ENCODE measurements at regions of chr9 and their contacts with region 1.

Region 1: GRCh38 chr9:36166101-36166927 is 2.9 kb upstream of the CCIN start:
- DNase-seq: peak; percentile 82 to 93 (median 86)
- ATAC-seq: peak; percentile 60 to 91 (median 90)
- H3K4me3 ChIP-seq: peak overlapping the region in 11 of 12 donors; percentile 28 to 67 (median 47)
- H3K27ac ChIP-seq: peak overlapping the region in 11 of 12 donors; percentile 22 to 89 (median 60)
- H3K4me1 ChIP-seq: peaks cover 0 to 51% (median 17%) of the 10 kb centered on the region in 12 donors
- H3K27me3 ChIP-seq: peaks cover 0 to 4% (median 0%) of the 10 kb centered on the region in 9 donors
- CTCF ChIP-seq: peak; percentile 90 to 99 (median 96)
- POLR2A ChIP-seq: no peak

Region 2: DNA sequence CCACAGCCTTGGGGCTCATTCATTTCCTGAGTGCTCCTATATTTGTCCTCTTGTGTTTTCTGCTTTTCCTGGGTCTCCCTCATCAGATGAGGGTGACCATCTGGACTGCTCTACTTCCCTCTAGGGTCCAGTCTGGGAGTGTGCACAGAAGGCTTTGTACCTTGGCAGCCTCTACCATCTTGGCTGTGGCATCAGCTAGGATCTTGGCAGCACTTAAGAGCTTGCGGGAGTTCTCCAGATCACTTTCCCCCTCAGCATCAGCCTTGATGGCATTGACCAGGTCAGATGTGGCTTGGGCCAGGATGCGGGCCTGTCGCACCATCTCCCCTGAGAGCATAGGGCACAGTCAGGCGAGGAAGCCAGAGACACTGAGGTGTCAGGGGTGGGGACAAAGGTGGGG is 450.1 kb before region 1 on chr9:
- intact Hi-C with region 1: no loop called
- DNase-seq: no peak
- ATAC-seq: peak in 2 of 4 donors; percentile 3 to 10
- H3K4me3 ChIP-seq: no peak overlapping the region
- H3K27ac ChIP-seq: no peak overlapping the region
- H3K4me1 ChIP-seq: peaks cover 0 to 3% (median 0%) of the 10 kb centered on the region in 12 donors
- H3K27me3 ChIP-seq: no peaks in the 10 kb centered on the region
- CTCF ChIP-seq: no peak
- POLR2A ChIP-seq: no peak

Region 3: DNA sequence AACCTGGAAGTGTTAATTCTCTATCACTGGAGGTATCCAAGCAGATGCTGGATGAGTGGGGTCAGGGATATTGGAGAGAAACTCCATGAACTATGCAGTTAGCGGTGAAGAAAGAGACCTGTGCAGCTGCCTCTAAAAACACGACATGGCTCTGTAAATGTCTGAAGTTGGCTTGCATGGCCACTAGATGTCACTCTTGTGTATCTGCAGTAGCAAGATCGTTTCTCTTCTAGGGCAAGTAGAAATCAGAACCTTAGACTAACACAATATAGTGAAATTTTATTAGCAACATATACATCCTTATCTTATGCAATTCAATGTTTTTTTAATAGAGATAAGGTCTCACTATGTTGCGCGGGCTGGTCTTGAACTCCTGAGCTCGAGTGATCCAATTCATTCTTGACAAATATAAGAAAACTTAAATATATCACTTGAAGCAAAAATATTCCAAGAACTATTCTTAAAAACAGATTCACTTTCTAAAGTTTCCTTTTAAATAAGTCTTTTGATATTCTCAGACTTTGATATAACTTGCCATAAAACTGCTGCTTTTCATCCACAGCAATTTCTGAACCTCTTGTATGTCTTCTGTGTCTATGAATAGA is 211.3 kb before region 1 on chr9:
- intact Hi-C with region 1: loop called in 3 of 10 experiments (anchors 10 kb)
- DNase-seq: peak in 2 of 5 donors; percentile 50 to 54
- ATAC-seq: peak in 3 of 4 donors; percentile 75 to 84 (median 79)
- H3K4me3 ChIP-seq: no peak overlapping the region
- H3K27ac ChIP-seq: no peak overlapping the region
- H3K4me1 ChIP-seq: peaks cover 0 to 10% (median 0%) of the 10 kb centered on the region in 12 donors
- H3K27me3 ChIP-seq: peaks cover 0 to 6% (median 0%) of the 10 kb centered on the region in 9 donors
- CTCF ChIP-seq: peak; percentile 83 to 94 (median 88)
- POLR2A ChIP-seq: no peak

Region 4: DNA sequence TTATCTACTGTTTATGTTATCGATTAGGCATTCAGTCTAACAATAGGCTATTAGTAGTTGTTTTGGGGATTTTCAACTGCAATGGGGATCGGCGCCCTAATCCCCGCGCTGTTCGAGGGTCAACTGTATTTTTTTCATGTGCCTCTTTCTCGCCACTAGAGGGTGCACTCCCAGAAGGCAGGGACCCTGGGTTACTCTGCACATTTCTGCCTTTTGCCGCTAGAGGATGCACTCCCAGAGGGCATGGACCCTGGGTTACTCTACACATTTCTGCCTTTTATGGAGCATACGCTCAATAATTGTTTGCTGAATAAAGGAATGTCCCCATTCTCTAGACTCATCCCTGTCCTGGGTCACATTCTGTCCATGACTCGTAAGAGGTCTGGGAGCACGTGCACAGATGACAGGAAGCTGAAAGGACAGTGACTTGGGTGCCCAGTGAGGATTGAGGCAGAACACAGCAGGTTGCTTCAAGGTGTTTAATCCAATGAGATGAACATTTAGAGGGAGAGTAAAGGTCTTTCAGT is 157.5 kb before region 1 on chr9:
- intact Hi-C with region 1: loop called in 3 of 10 experiments (anchors 5 to 10 kb)
- DNase-seq: peak in 4 of 5 donors; percentile 15 to 56 (median 47)
- ATAC-seq: peak; percentile 64 to 96 (median 72)
- H3K4me3 ChIP-seq: peak overlapping the region in 1 of 12 donors; percentile 5
- H3K27ac ChIP-seq: no peak overlapping the region
- H3K4me1 ChIP-seq: peaks cover 0 to 4% (median 0%) of the 10 kb centered on the region in 12 donors
- H3K27me3 ChIP-seq: no peaks in the 10 kb centered on the region
- CTCF ChIP-seq: peak; percentile 67 to 100 (median 96)
- POLR2A ChIP-seq: no peak

Region 5: DNA sequence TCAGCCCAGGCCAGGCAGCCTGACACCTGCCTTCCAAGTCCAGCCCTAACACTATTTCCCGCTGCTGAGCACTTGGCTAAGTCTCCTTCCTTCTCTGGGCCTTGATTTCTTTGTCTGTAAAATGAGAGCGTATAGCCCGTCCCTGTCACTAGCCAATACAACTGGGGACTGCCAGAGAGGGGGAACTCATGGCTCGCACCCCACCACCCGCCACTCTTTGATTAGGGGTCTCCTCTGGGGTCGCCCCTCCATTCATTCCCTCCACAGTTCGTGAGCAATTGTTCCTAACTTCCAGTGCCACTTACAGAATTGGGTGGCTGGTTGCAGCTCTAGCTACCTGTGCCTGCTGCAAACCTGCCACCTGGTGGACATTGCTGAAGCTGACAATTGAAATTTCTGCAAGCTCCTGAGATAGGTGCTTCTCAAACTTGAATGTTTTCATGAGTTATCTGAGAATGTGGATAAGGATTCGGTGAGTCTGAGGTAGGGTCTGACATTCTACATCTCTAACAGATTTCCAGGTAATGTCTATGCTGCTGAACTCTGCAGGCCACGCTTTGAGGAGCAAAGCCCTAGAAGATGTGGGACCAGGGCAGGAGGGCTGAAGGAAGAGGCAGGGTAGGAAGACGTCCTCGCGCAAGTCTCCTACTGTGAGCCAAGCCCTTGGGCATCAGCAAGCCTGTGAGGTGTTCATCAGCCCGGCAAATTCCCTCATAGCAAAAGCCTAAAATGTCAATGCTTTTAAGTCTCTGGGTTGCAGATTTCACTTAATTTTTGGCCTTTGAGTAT is 142.9 kb before region 1 on chr9:
- intact Hi-C with region 1: loop called in 1 of 10 experiments (anchors 10 kb)
- DNase-seq: peak; percentile 51 to 68 (median 57)
- ATAC-seq: peak; percentile 55 to 80 (median 65)
- H3K4me3 ChIP-seq: no peak overlapping the region
- H3K27ac ChIP-seq: no peak overlapping the region
- H3K4me1 ChIP-seq: peaks cover 0 to 4% (median 0%) of the 10 kb centered on the region in 12 donors
- H3K27me3 ChIP-seq: no peaks in the 10 kb centered on the region
- CTCF ChIP-seq: peak; percentile 71 to 83 (median 80)
- POLR2A ChIP-seq: no peak

Region 6: DNA sequence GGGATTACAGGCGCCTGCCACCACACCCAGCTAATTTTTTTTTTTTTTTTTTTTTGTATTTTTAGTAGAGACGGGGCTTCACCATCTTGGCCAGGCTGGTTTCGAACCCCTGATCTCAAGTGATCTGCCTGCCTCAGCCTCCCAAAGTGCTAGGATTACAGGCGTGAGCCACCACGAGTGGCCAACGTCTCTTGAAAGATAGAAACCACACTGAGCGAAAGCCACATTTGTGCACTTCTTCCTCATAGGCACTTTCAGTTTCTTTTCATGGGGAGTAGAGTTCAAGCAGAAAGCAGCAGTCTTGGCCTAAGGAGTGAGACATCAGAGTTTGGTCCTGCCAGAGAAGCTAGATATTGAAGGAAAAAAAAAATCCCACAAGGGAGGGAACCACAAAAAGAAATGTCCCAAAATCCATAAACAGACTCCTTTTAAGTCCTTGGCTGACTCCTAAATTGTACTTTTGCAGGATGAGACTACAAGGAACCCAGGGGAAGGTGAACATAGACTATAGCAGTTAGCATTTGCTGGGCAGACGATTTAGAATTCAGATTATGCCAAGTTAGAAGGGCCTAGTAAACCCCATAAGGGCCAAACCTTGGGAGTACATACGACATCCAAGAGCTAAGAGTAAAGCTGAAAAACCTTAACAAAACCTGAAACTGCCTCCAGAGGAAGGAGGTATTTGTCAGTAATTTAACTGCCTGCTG is 73.7 kb before region 1 on chr9:
- intact Hi-C with region 1: no loop called
- DNase-seq: no peak
- ATAC-seq: peak in 1 of 4 donors; percentile 49
- H3K4me3 ChIP-seq: no peak overlapping the region
- H3K27ac ChIP-seq: peak overlapping the region in 1 of 12 donors; percentile 84
- H3K4me1 ChIP-seq: peaks cover 0 to 31% (median 11%) of the 10 kb centered on the region in 12 donors
- H3K27me3 ChIP-seq: no peaks in the 10 kb centered on the region
- CTCF ChIP-seq: no peak
- POLR2A ChIP-seq: no peak

Region 7: GRCh38 chr9:36102742-36103495 is 63.4 kb before region 1 on chr9:
- intact Hi-C with region 1: loop called (anchors 1 to 5 kb)
- DNase-seq: peak; percentile 76 to 89 (median 80)
- ATAC-seq: peak; percentile 80 to 97 (median 94)
- H3K4me3 ChIP-seq: no peak overlapping the region
- H3K27ac ChIP-seq: peak overlapping the region in 3 of 12 donors; percentile 3 to 15 (median 11)
- H3K4me1 ChIP-seq: peaks cover 0 to 9% (median 0%) of the 10 kb centered on the region in 12 donors
- H3K27me3 ChIP-seq: no peaks in the 10 kb centered on the region
- CTCF ChIP-seq: peak; percentile 62 to 88 (median 78)
- POLR2A ChIP-seq: no peak

Region 8: DNA sequence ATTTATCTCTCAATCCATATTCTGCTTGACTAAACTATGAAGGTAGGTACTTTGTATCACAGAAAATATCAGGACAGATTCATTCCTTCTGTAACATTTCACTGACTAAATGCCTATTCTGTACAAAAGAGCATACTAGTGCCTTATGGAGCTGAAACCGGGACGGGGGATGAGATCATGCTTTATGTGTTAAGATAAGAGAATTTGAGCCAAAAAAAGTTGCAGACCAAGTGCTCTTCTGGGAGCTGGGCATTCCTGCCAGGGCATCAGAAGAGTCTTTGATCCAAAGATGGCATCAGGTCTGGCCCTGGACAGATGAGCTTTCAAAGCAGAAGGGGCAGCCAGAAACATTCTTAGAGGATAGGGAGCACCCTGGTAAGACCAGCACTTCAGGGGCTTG is 57.2 kb before region 1 on chr9:
- intact Hi-C with region 1: loop called in 2 of 10 experiments (anchors 5 kb)
- DNase-seq: no peak
- ATAC-seq: no peak
- H3K4me3 ChIP-seq: no peak overlapping the region
- H3K27ac ChIP-seq: no peak overlapping the region
- H3K4me1 ChIP-seq: peaks cover 0 to 5% (median 0%) of the 10 kb centered on the region in 12 donors
- H3K27me3 ChIP-seq: no peaks in the 10 kb centered on the region
- CTCF ChIP-seq: no peak
- POLR2A ChIP-seq: no peak

Region 9: GRCh38 chr9:36127652-36128244 is 38.6 kb before region 1 on chr9:
- intact Hi-C with region 1: loop called in 1 of 10 experiments (anchors 10 kb)
- DNase-seq: no peak
- ATAC-seq: peak in 3 of 4 donors; percentile 35 to 73 (median 65)
- H3K4me3 ChIP-seq: no peak overlapping the region
- H3K27ac ChIP-seq: peak overlapping the region in 1 of 12 donors; percentile 69
- H3K4me1 ChIP-seq: peaks cover 0 to 39% (median 0%) of the 10 kb centered on the region in 12 donors
- H3K27me3 ChIP-seq: no peaks in the 10 kb centered on the region
- CTCF ChIP-seq: no peak
- POLR2A ChIP-seq: no peak

Region 10: DNA sequence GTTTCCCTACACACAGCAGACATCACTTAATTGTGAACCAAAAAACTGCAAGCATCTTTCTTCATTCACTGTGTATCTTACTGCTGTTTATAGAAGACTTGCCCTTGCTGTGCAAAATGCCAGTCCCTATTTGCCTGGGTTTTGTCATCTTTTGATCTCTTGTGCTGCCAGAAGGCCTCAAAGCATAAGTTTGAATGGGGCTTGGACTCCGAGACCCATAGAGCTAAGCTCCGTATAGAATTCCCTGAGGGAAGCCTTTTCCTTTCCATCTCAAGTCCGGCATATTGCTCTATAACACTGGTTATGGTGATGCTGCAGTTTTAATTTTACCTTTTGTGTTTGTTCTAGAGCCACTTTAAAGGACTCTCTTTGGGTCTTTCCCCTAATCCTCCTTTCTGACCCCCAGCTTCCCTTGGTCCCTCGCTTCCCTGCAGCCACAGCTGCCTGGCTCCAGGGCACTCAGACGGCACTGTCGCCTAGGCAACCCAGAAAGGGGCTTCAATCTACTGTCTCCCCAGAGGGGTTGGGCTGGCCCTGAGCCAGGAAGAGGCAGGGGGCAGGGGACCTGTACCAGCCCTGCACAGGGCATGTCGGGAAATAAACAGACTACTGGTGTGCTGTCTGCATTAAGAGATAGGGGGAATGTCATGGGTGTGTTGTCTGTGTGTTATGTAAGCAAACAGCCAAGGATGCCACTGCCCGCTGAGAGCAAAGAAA is 333.0 kb after region 1 on chr9:
- intact Hi-C with region 1: no loop called
- DNase-seq: no peak
- ATAC-seq: no peak
- H3K4me3 ChIP-seq: no peak overlapping the region
- H3K27ac ChIP-seq: no peak overlapping the region
- H3K4me1 ChIP-seq: peaks cover 0 to 5% (median 0%) of the 10 kb centered on the region in 12 donors
- H3K27me3 ChIP-seq: no peaks in the 10 kb centered on the region
- CTCF ChIP-seq: no peak
- POLR2A ChIP-seq: no peak

Measured in heart left ventricle (tissue), 16 donors.